Activated CD4-positive, alpha-beta T cell treated with anti-CD3 and anti-CD28 coated beads, Interleukin-2, amount 10 ng/mL, durations not matched to agents 7 days and 5 days (primary cell): ENCODE measurements at regions of chr5 and their contacts with region 1.

Region 1: DNA sequence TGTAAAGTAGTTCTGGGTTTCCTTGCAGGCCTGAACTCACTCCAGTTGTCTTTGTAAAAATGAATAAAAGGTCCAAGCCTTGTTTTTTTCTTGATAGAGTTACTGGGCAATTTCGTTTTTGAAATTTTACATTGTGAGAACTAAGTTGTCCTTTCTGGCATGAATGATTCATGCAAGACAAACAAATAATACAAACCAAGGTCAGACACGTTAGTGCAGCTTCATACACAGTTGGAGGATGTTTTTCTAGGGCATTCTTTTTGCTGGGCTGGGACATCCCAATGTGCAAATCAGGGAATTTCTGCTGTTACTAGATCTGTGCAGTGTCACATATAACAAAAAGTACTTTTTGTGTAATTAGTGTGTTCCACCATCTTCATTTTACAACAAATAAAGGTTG is 96.0 kb downstream of the MEGF10 start:
- DNase-seq: no peak
- H3K4me3 Mint-ChIP-seq: no peak overlapping the region
- H3K27ac Mint-ChIP-seq: no peak overlapping the region
- H3K4me1 Mint-ChIP-seq: no peaks in the 10 kb centered on the region
- H3K27me3 Mint-ChIP-seq: no peaks in the 10 kb centered on the region

Region 2: DNA sequence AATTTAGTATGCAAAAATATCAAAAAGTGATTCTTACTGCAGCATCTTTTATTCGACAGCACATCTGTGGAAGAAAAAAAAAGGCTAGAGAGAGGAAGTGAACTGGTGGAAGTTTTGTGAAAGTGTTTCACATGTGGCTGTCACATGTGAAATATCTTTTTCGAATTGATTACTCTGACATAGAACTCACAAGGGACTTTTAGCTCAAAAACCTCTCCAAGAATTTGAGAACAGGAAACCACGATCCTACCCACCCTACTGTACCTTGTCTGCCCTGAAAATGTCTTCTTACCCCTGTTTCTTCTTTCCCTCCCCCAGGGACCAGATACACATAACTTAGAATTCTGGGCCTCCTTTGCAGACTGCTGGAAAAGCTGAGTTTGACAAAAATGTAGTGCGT is 24.4 kb after region 1 on chr5:
- CTCF ChIA-PET with region 1: no interaction called
- POLR2A ChIA-PET with region 1: interaction called, 16 read pairs
- DNase-seq: no peak
- H3K4me3 Mint-ChIP-seq: no peak overlapping the region
- H3K27ac Mint-ChIP-seq: no peak overlapping the region
- H3K4me1 Mint-ChIP-seq: peaks cover 20% of the 10 kb centered on the region
- H3K27me3 Mint-ChIP-seq: peaks cover 14% of the 10 kb centered on the region